Activated CD8-positive, alpha-beta T cell treated with anti-CD3 and anti-CD28 coated beads for 36 hours (primary cell): ENCODE measurements at regions of chr1 and their contacts with region 1.

Region 1: DNA sequence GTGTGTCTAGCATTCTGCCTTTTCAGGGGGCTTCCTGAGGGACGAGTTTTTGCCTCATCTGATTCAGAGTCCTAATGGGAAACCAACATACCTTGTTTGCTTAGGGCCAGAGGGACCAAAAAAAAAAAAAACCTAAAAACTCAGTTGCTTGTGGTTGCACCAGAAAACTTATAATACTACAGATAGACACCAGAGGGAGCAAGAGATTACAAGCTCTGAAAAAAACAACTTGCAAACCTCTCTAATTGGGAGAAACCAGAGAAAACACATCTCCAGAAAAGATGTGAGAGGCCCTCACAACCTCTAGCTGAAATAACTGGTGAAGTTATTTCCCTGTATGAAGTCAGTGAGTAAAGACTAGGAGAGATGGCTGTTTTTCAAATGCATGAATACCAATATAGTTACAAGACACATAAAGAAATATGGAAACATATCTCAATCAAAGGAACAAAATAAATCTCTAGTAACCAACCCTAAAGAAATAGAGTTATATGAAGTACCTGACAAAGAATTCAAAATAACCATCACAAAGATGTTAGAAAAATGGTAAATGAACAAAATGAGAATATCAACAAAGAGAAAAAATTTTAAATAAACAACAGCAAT is 233.7 kb upstream of the NFIA start:
- DNase-seq: no peak
- ATAC-seq: no peak
- H3K4me3 Mint-ChIP-seq: no peak overlapping the region
- H3K27ac Mint-ChIP-seq: no peak overlapping the region
- H3K4me1 Mint-ChIP-seq: no peaks in the 10 kb centered on the region
- H3K27me3 Mint-ChIP-seq: peaks cover 12% of the 10 kb centered on the region
- CTCF ChIP-seq: peak; percentile 60

Region 2: GRCh38 chr1:61043010-61043820 is 194.5 kb after region 1 on chr1:
- CTCF ChIA-PET with region 1: interaction called, 7 read pairs
- POLR2A ChIA-PET with region 1: no interaction called
- intact Hi-C with region 1: loop called (anchors 5 kb)
- DNase-seq: peak; percentile 90
- ATAC-seq: peak; percentile 97
- H3K4me3 Mint-ChIP-seq: peak overlapping the region; percentile 67
- H3K27ac Mint-ChIP-seq: no peak overlapping the region
- H3K4me1 Mint-ChIP-seq: peaks cover 2% of the 10 kb centered on the region
- H3K27me3 Mint-ChIP-seq: peaks cover 24% of the 10 kb centered on the region
- CTCF ChIP-seq: peak; percentile 86